Activated CD4-positive, alpha-beta T cell treated with anti-CD3 and anti-CD28 coated beads for 36 hours (primary cell): ENCODE measurements at regions of chr16 and their contacts with region 1.

Region 1: GRCh38 chr16:67364600-67365235 is 28.6 kb downstream of the TPPP3 start:
- DNase-seq: no peak
- ATAC-seq: no peak
- H3K4me3 Mint-ChIP-seq: no peak overlapping the region
- H3K27ac Mint-ChIP-seq: no peak overlapping the region
- H3K4me1 Mint-ChIP-seq: peaks cover 8% of the 10 kb centered on the region
- H3K27me3 Mint-ChIP-seq: no peaks in the 10 kb centered on the region

Region 2: DNA sequence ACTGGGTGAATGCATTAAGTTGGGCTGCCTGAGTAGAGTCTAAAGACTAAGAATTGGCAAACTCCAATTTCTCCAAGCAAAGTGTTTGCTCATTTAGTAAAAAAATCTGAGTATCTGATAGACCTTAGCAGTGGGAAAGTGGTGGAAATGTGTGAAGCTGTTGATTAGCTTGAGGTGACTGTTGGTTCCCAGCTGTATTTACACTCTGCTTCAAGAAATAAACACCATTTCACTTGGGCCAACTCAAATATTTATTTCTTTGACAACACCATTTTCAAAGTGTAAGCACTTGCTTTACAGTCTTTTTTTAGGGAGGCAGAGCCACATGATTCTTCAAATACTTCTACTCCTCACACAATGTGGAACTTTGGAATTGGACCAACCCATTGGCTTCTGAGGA is 46.9 kb before region 1 on chr16:
- CTCF ChIA-PET with region 1: no interaction called
- POLR2A ChIA-PET with region 1: no interaction called
- intact Hi-C with region 1: loop called in 1 of 2 experiments (anchors 5 kb)
- DNase-seq: no peak
- ATAC-seq: no peak
- H3K4me3 Mint-ChIP-seq: no peak overlapping the region
- H3K27ac Mint-ChIP-seq: no peak overlapping the region
- H3K4me1 Mint-ChIP-seq: peaks cover 9% of the 10 kb centered on the region
- H3K27me3 Mint-ChIP-seq: peaks cover 22% of the 10 kb centered on the region

Region 3: DNA sequence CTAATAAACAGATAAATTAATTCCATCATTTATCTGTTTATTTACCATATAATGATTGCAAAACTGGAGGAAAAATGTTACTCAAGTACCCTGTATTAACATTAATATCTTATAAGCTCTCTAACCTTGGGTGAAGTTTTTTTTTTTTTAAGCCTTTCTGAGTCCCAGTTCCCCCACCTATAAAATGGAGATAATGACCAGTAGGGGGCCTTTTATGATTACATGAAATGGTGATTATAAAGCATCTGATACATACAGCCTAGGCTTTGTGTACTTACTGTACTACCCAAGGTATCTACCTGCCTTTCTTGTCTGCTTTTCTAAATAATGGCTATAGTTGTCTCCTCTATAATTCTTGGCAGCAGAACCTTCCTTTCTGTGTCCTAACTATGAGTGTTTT is 15.5 kb before region 1 on chr16:
- CTCF ChIA-PET with region 1: interaction called, 4 read pairs
- POLR2A ChIA-PET with region 1: no interaction called
- intact Hi-C with region 1: loop called in 1 of 2 experiments (anchors 2 kb)
- DNase-seq: no peak
- ATAC-seq: peak; percentile 55
- H3K4me3 Mint-ChIP-seq: no peak overlapping the region
- H3K27ac Mint-ChIP-seq: no peak overlapping the region
- H3K4me1 Mint-ChIP-seq: peaks cover 2% of the 10 kb centered on the region
- H3K27me3 Mint-ChIP-seq: peaks cover 2% of the 10 kb centered on the region

Region 4: DNA sequence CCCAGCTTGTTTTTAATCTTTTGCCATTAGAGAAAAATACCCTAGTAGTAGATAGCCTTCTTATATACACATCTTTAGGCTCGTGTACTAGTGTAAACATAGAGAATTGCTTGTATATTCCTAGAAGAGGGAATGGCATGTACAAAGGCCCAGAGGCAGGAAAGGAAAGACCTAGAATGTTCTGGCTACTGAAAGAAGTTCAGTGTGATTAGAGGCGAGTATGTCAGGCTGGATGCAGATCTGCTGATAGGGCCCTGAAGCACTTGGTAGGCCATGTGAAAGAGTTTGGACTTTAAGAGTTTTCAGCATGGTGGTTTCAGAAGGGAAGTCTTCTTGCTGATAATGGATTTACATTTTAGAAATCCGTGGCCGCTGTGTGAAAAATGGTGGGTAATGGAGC is 215.0 kb after region 1 on chr16:
- CTCF ChIA-PET with region 1: no interaction called
- POLR2A ChIA-PET with region 1: no interaction called
- intact Hi-C with region 1: loop called in 1 of 2 experiments (anchors 10 kb)
- DNase-seq: no peak
- ATAC-seq: no peak
- H3K4me3 Mint-ChIP-seq: no peak overlapping the region
- H3K27ac Mint-ChIP-seq: no peak overlapping the region
- H3K4me1 Mint-ChIP-seq: peaks cover 12% of the 10 kb centered on the region
- H3K27me3 Mint-ChIP-seq: no peaks in the 10 kb centered on the region